Naive thymus-derived CD4-positive, alpha-beta T cell (primary cell): ENCODE measurements at regions of chr12 and their contacts with region 1.

Region 1: GRCh38 chr12:50620109-50620977 is 115.6 kb downstream of the DIP2B start:
- DNase-seq: no peak
- ATAC-seq: no peak
- H3K4me3 ChIP-seq: no peak overlapping the region
- H3K4me3 Mint-ChIP-seq: peak overlapping the region in 6 of 10 donors; percentile 7 to 65 (median 38)
- H3K27ac ChIP-seq: no peak overlapping the region
- H3K27ac Mint-ChIP-seq: peak overlapping the region in 8 of 9 donors; percentile 38 to 94 (median 72)
- H3K4me1 ChIP-seq: peaks cover 7 to 41% of the 10 kb centered on the region in 2 donors
- H3K4me1 Mint-ChIP-seq: peaks cover 38 to 83% (median 73%) of the 10 kb centered on the region in 7 donors
- H3K27me3 ChIP-seq: no peaks in the 10 kb centered on the region
- H3K27me3 Mint-ChIP-seq: no peaks in the 10 kb centered on the region

Region 2: GRCh38 chr12:49983892-49984291 is 636.5 kb before region 1 on chr12:
- CTCF ChIA-PET with region 1: no interaction called
- POLR2A ChIA-PET with region 1: no interaction called
- intact Hi-C with region 1: no loop called
- DNase-seq: no peak
- ATAC-seq: peak; percentile 53
- H3K4me3 ChIP-seq: no peak overlapping the region
- H3K4me3 Mint-ChIP-seq: no peak overlapping the region
- H3K27ac ChIP-seq: no peak overlapping the region
- H3K27ac Mint-ChIP-seq: no peak overlapping the region
- H3K4me1 ChIP-seq: no peaks in the 10 kb centered on the region
- H3K4me1 Mint-ChIP-seq: peaks cover 0 to 5% (median 0%) of the 10 kb centered on the region in 7 donors
- H3K27me3 ChIP-seq: no peaks in the 10 kb centered on the region
- H3K27me3 Mint-ChIP-seq: no peaks in the 10 kb centered on the region

Region 3: DNA sequence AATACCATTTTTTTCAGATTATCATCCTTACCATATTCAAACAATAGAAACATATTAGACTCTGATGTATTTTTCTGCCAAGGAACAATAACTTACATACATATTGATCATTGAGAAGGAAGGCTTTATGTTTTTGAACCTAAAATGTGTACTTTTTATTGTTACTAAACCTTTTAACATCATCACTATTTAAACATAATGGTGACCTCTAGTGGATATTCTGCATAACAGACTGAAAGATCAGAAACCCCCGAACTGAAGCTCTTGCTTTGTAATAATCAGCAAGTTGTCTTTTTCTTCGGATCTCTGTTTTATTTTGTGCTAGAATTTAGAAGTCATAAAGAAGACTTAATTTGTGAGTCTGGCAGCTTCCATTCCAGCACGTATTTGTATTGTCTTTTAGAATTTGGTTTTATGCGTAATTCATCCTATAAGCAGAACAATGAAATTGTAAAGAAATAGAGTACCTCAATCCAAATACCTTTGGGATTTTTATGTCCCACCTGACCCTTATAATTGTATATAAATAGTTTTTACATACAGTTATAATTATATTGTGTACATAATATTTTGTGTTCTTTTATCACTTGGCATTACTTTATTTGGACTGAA is 17.6 kb after region 1 on chr12:
- CTCF ChIA-PET with region 1: interaction called, 3 read pairs
- POLR2A ChIA-PET with region 1: interaction called, 3 read pairs
- intact Hi-C with region 1: loop called in 1 of 2 experiments (anchors 1 kb)
- DNase-seq: peak in 7 of 9 donors; percentile 39 to 70 (median 53)
- ATAC-seq: peak; percentile 79
- H3K4me3 ChIP-seq: no peak overlapping the region
- H3K4me3 Mint-ChIP-seq: peak overlapping the region in 1 of 10 donors; percentile 2
- H3K27ac ChIP-seq: no peak overlapping the region
- H3K27ac Mint-ChIP-seq: peak overlapping the region in 8 of 9 donors; percentile 13 to 86 (median 55)
- H3K4me1 ChIP-seq: peaks cover 0 to 16% of the 10 kb centered on the region in 2 donors
- H3K4me1 Mint-ChIP-seq: peaks cover 34 to 72% (median 65%) of the 10 kb centered on the region in 7 donors
- H3K27me3 ChIP-seq: no peaks in the 10 kb centered on the region
- H3K27me3 Mint-ChIP-seq: no peaks in the 10 kb centered on the region

Region 4: DNA sequence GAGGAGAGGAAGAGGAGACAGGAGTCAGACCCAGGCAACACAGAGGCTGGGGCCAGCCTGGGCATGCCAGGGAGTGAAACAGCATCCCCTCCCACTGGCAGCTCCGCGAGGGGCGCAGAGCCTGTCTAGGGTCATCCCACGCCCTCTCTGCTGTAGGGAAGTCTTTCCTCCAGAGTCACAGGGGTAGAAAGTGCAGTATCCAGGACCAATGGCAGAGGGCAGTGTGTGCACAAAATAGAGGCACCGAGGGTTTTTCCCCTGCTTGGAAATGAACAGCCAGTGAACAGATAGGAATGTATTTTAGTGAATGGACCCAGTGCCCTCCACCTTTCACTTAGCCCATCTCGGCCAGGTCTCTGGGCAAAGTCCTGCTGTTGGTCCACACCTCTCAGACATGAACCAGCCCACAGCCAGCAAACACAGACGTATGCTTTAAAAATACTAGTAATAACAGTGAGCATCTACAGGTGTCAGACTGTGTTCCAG is 1962.7 kb after region 1 on chr12:
- CTCF ChIA-PET with region 1: no interaction called
- POLR2A ChIA-PET with region 1: no interaction called
- intact Hi-C with region 1: no loop called
- DNase-seq: peak; percentile 47 to 83 (median 76)
- ATAC-seq: peak; percentile 67
- H3K4me3 ChIP-seq: no peak overlapping the region
- H3K4me3 Mint-ChIP-seq: peak overlapping the region in 5 of 10 donors; percentile 9 to 50 (median 31)
- H3K27ac ChIP-seq: peak overlapping the region; percentile 20
- H3K27ac Mint-ChIP-seq: peak overlapping the region; percentile 21 to 97 (median 85)
- H3K4me1 ChIP-seq: peaks cover 0 to 60% of the 10 kb centered on the region in 2 donors
- H3K4me1 Mint-ChIP-seq: peaks cover 39 to 72% (median 64%) of the 10 kb centered on the region in 7 donors
- H3K27me3 ChIP-seq: no peaks in the 10 kb centered on the region
- H3K27me3 Mint-ChIP-seq: peaks cover 0 to 4% (median 0%) of the 10 kb centered on the region in 5 donors